IMR-90 (cell line): ENCODE measurements at regions of chr12 and their contacts with region 1.

Region 1: GRCh38 chr12:120086801-120087621 is 29.5 kb downstream of the RAB35 start:
- DNase-seq: peak; percentile 99
- ATAC-seq: peak; percentile 96
- H3K4me3 ChIP-seq: peak overlapping the region; percentile 50
- H3K27ac ChIP-seq: peak overlapping the region; percentile 62
- H3K4me1 ChIP-seq: no peaks in the 10 kb centered on the region; the same call in 1 of the 2 replicates
- H3K27me3 ChIP-seq: no peaks in the 10 kb centered on the region
- CTCF ChIP-seq: peak; percentile 99
- POLR2A ChIP-seq: peak; percentile 36; the same call in 1 of the 2 replicates
- RAD21 ChIP-seq: peak; percentile 63

Region 2: GRCh38 chr12:119988782-119989668 is 98.0 kb before region 1 on chr12 and contains the start of gene BICDL1:
- CTCF ChIA-PET with region 1: no interaction called
- POLR2A ChIA-PET with region 1: no interaction called
- dilution Hi-C with region 1: no loop called
- in situ Hi-C with region 1: no loop called
- intact Hi-C with region 1: loop called (anchors 2 kb)
- DNase-seq: peak; percentile 23
- ATAC-seq: peak; percentile 78
- H3K4me3 ChIP-seq: peak within 1 kb of the TSS; percentile 44
- H3K27ac ChIP-seq: no peak within 1 kb of the TSS
- H3K4me1 ChIP-seq: peaks cover 3% of the 10 kb centered on the region; the same call in 1 of the 2 replicates
- H3K27me3 ChIP-seq: peaks cover 24% of the 10 kb centered on the region
- CTCF ChIP-seq: no peak
- POLR2A ChIP-seq: no peak
- RAD21 ChIP-seq: no peak
- total RNA-seq, gene BICDL1: not detected in 2 replicates

Region 3: DNA sequence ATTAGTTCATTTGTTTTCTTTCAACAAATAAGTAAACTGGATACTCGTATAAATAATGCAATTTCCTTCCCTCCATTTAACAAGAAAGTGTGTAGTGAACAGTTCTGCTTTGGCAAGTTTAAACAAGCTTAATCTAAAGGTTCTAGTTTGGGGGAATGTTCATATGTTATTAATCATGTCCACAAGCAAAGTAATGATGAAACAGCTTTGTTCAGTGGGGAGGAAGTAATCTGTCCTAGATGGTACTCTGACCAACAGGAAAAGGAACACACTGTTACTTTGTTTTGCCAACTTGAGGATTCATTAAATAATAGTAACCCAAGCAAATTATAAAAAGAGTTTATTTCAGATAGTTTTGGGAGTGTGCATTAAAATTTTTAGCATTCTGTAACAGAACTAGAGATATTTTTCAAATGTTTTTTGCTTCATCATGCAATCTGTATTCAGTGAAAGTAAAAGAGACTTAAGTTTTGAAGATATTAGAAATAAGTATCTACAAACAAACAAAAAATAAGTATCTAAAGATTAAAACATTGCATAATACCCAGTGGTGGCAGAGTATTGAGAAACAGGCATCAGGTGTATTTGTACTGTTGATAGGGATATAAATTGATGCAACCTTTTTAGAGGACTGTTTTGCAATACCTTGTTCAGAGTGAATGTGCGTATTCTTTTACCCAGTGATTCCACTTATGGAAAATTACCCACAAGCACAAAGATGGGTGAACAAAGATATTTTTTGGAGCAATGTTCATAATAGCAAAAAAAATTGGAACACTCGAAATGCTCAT is 31.6 kb before region 1 on chr12:
- CTCF ChIA-PET with region 1: no interaction called
- POLR2A ChIA-PET with region 1: no interaction called
- dilution Hi-C with region 1: no loop called
- in situ Hi-C with region 1: no loop called
- intact Hi-C with region 1: no loop called
- DNase-seq: no peak
- ATAC-seq: no peak
- H3K4me3 ChIP-seq: no peak overlapping the region
- H3K27ac ChIP-seq: no peak overlapping the region
- H3K4me1 ChIP-seq: no peaks in the 10 kb centered on the region
- H3K27me3 ChIP-seq: no peaks in the 10 kb centered on the region; the same call in none of the 2 replicates
- CTCF ChIP-seq: no peak
- POLR2A ChIP-seq: no peak
- RAD21 ChIP-seq: no peak